K562 (cell line): ENCODE measurements at regions of chr19 and their contacts with region 1.

Region 1: GRCh38 chr19:35090506-35091237 is 25.0 kb upstream of the FXYD3 start:
- DNase-seq: peak; percentile 79 to 87 (median 84)
- ATAC-seq: peak; percentile 88
- H3K4me3 ChIP-seq: no peak overlapping the region
- H3K27ac ChIP-seq: no peak overlapping the region
- H3K4me1 ChIP-seq: peaks cover 10 to 38% of the 10 kb centered on the region in 2 experiments; a peak in 4 of 5 replicates
- H3K27me3 ChIP-seq: peaks cover 0 to 4% of the 10 kb centered on the region in 2 experiments; a peak in 1 of 5 replicates
- CTCF ChIP-seq: peak; percentile 67 to 70 (median 67)
- EP300 ChIP-seq: no peak; the same call in 1 of the 2 replicates
- POLR2A ChIP-seq: no peak
- RAD21 ChIP-seq: peak; percentile 39 to 66

Region 2: GRCh38 chr19:35044317-35045117 is 46.2 kb before region 1 on chr19:
- CTCF ChIA-PET with region 1: interaction called, 5 read pairs
- POLR2A ChIA-PET with region 1: interaction called, 4 read pairs
- in situ Hi-C with region 1: no loop called
- intact Hi-C with region 1: loop called (anchors 10 kb)
- DNase-seq: peak; percentile 74 to 80 (median 77)
- ATAC-seq: no peak
- H3K4me3 ChIP-seq: no peak overlapping the region
- H3K27ac ChIP-seq: no peak overlapping the region
- H3K4me1 ChIP-seq: peaks cover 21 to 40% of the 10 kb centered on the region in 2 experiments
- H3K27me3 ChIP-seq: 0 out of 5 replicates have a peak, but pooled peaks cover 0 to 4% of the 10 kb centered on the region in 2 experiments
- CTCF ChIP-seq: peak; percentile 88 to 98 (median 89)
- EP300 ChIP-seq: no peak
- POLR2A ChIP-seq: no peak
- RAD21 ChIP-seq: peak; percentile 48 to 67